ENCODE measurements at regions of chr10 and their contacts with region 1.

Region 1: DNA sequence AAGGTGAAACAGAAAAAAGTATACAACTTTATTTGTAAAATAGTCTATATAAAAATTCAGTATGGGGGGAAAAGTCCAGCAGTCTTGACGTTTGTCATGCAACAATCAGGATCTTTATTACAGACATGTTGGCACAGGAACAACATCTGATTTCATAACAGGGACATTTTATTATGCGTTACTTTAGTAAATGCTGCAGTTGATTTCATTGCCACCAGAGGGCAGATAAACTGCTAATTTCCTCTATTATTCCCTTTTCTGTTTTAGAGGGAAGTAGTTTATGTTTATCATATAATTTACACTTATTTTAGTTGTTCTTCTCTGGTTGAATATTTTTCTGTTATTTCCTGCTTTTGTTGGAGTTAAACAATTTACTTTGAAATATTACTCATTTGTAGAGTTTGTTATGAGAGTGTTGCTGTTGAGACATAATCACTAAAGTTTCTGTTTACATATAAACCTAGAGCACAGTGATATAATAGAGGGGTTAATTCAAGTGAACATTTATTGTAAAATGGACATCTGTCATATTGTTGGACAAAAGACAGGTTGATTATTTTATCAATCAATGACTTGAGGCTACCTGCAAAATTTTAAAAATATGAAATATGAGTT is 3.3 kb downstream of the PLXDC2 start:
- DNase-seq: peak in 1 of 10 donors; percentile 42
- H3K4me3 ChIP-seq: peak overlapping the region; percentile 27 to 92 (median 83)
- H3K27ac ChIP-seq: peak overlapping the region in 58 of 59 donors; percentile 7 to 96 (median 86)
- H3K27me3 ChIP-seq: no peaks in the 10 kb centered on the region
- CTCF ChIP-seq: peak; percentile 72 to 99 (median 90)

Region 2: GRCh38 chr10:19892295-19893076 is 73.0 kb after region 1 on chr10:
- intact Hi-C with region 1: loop called in 1 of 2 experiments (anchors 5 kb)
- DNase-seq: no peak
- H3K4me3 ChIP-seq: peak overlapping the region in 19 of 59 donors; percentile 2 to 46 (median 22)
- H3K27ac ChIP-seq: peak overlapping the region in 48 of 59 donors; percentile 11 to 85 (median 53)
- H3K27me3 ChIP-seq: no peaks in the 10 kb centered on the region
- CTCF ChIP-seq: peak in 23 of 56 donors; percentile 2 to 52 (median 26)

Region 3: GRCh38 chr10:19958787-19959186 is 139.3 kb after region 1 on chr10:
- intact Hi-C with region 1: loop called in 1 of 2 experiments (anchors 2 kb)
- DNase-seq: no peak
- H3K4me3 ChIP-seq: peak overlapping the region in 1 of 59 donors; percentile 1
- H3K27ac ChIP-seq: peak overlapping the region in 56 of 59 donors; percentile 26 to 98 (median 92)
- H3K27me3 ChIP-seq: no peaks in the 10 kb centered on the region
- CTCF ChIP-seq: no peak

Region 4: GRCh38 chr10:20004087-20004523 is 184.6 kb after region 1 on chr10:
- intact Hi-C with region 1: loop called (anchors 5 to 10 kb)
- DNase-seq: peak in 2 of 10 donors; percentile 43 to 49
- H3K4me3 ChIP-seq: peak overlapping the region in 7 of 59 donors; percentile 7 to 40 (median 11)
- H3K27ac ChIP-seq: peak overlapping the region in 58 of 59 donors; percentile 15 to 97 (median 90)
- H3K27me3 ChIP-seq: no peaks in the 10 kb centered on the region
- CTCF ChIP-seq: no peak

Region 5: GRCh38 chr10:20100171-20100570 is 280.6 kb after region 1 on chr10:
- intact Hi-C with region 1: loop called (anchors 5 to 10 kb)
- DNase-seq: no peak
- H3K4me3 ChIP-seq: peak overlapping the region in 17 of 59 donors; percentile 3 to 39 (median 14)
- H3K27ac ChIP-seq: peak overlapping the region in 51 of 59 donors; percentile 0 to 80 (median 44)
- H3K27me3 ChIP-seq: no peaks in the 10 kb centered on the region
- CTCF ChIP-seq: no peak

Region 6: GRCh38 chr10:20105243-20105642 is 285.7 kb after region 1 on chr10:
- intact Hi-C with region 1: loop called (anchors 5 to 10 kb)
- DNase-seq: no peak
- H3K4me3 ChIP-seq: no peak overlapping the region
- H3K27ac ChIP-seq: no peak overlapping the region
- H3K27me3 ChIP-seq: no peaks in the 10 kb centered on the region
- CTCF ChIP-seq: no peak

Region 7: GRCh38 chr10:20288060-20288459 is 468.5 kb after region 1 on chr10:
- intact Hi-C with region 1: loop called (anchors 5 kb)
- DNase-seq: peak in 3 of 10 donors; percentile 21 to 54 (median 49)
- H3K4me3 ChIP-seq: peak overlapping the region in 14 of 59 donors; percentile 2 to 40 (median 12)
- H3K27ac ChIP-seq: peak overlapping the region in 37 of 59 donors; percentile 10 to 82 (median 64)
- H3K27me3 ChIP-seq: no peaks in the 10 kb centered on the region
- CTCF ChIP-seq: peak in 1 of 56 donors; percentile 11

Measured in dorsolateral prefrontal cortex (tissue), 120 donors.